ENCODE measurements at regions of chr11 and their contacts with region 1.

Region 1: GRCh38 chr11:15101072-15101709 is 13.5 kb upstream of the INSC start:
- ATAC-seq: peak; percentile 67 to 98 (median 82)
- H3K4me3 ChIP-seq: no peak overlapping the region
- H3K27ac ChIP-seq: no peak overlapping the region
- H3K4me1 ChIP-seq: no peaks in the 10 kb centered on the region

Region 2: DNA sequence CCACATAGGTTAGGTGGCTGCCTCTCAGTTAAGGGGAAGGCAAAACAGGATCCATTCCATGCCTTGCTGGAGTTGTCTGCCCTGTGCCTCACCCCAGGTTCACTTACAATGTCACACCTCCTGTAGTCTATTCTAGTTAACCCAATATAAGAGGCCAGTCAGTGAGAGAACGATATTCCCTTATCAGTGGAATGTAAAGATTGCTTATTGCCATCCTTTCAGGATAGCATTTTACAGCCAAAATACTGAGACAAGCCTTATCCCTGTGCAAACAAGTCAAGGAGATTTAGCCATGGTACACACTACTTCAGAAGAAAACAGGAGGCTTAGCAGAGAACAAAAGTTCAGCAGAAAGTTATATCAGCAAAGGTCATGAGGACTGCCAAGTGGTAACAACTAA is 214.7 kb before region 1 on chr11:
- in situ Hi-C with region 1: no loop called
- ATAC-seq: no peak
- H3K4me3 ChIP-seq: no peak overlapping the region
- H3K27ac ChIP-seq: no peak overlapping the region
- H3K4me1 ChIP-seq: peaks cover 14 to 23% of the 10 kb centered on the region in 2 donors

Region 3: DNA sequence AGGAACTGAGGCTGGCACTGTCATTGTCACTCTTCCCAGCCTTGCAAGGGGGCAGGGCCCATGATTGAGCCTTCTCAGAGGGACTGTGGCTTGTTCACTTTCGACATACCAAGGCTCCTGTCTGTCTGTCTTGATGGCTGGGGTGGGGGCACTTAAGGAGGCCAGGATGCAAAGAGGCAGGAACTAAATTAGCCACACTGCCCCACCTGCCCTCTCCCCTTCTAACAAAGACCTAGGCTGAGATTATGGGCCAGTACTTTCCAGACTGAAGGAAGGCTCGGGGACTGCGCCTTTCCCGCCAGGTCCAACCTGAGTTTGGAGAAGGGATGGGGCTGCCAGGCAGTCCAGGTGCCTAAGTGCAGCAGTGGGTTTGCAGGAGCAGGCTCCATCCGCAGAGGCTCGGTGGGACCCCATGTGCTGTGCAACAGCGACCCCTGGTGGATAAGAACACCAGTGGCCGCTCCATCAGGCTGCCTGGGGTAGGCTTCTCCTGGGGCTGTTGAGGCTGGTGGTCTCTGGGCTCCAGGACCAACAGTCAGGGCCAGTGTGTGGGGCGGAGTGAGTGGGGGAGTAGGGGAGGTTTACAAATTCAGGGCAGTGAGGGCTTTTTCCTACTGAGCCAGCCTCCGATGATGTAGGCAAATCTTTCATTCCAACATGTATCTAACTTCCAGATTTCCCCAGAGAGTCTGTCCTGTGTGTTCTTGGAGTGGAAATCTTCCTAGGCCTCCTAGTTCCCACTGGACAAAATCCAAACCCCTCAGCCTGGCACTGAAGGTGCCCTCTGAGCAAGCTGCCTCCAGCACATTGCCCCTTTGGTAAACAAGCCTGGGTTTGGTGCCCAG is 107.4 kb after region 1 on chr11:
- in situ Hi-C with region 1: loop called in 1 of 9 experiments (anchors 10 kb)
- ATAC-seq: peak; percentile 93 to 100 (median 98)
- H3K4me3 ChIP-seq: no peak overlapping the region
- H3K27ac ChIP-seq: no peak overlapping the region
- H3K4me1 ChIP-seq: peaks cover 0 to 2% of the 10 kb centered on the region in 2 donors

Region 4: DNA sequence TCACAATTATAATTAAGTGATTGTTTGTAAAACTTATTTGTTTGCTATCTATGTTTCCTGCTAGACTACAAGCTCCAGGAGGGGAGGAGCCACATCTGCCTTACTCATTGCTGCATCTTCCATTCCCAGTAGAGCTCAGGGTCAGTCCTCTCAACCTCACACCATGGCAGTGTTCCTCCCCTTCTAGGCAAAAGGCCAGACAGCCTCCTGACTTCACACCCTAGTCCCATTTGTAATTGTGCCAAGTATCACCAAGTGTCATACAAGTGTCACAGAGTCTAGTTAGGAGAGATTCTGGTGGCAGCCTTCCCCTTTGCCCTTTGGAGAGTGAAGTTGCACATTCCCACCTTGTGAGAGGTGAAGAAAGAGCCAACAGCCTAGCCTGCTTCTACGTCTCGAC is 503.9 kb after region 1 on chr11:
- in situ Hi-C with region 1: no loop called
- ATAC-seq: no peak
- H3K4me3 ChIP-seq: no peak overlapping the region
- H3K27ac ChIP-seq: no peak overlapping the region
- H3K4me1 ChIP-seq: no peaks in the 10 kb centered on the region

Measured in motor neuron (in vitro differentiated cells).